ENCODE measurements at regions of chr2 and their contacts with region 1.

Region 1: GRCh38 chr2:152036611-152037469 is 62.0 kb downstream of the CACNB4 start:
- DNase-seq: peak; percentile 76
- H3K4me3 Mint-ChIP-seq: no peak overlapping the region
- H3K27ac Mint-ChIP-seq: no peak overlapping the region
- H3K4me1 Mint-ChIP-seq: no peaks in the 10 kb centered on the region
- H3K27me3 Mint-ChIP-seq: no peaks in the 10 kb centered on the region
- CTCF ChIP-seq: peak; percentile 86

Region 2: DNA sequence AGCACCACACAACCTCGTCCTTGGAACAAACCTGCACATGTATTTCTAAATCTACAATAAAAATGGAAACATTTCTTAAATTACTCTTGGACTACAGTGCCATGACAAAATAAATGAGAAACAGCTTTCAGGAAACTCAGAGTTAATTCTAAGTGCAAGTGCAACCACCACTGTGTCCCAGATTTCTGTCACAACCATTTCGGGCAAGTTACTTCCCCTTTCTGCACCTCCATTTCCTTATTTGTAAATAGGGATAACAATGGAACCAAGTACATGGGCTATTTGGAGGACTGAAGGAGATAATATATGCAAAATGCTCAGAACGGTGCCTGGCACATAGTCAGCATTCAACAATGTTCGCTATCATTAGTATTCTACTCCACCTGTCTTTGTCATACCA is 31.2 kb before region 1 on chr2:
- CTCF ChIA-PET with region 1: no interaction called
- POLR2A ChIA-PET with region 1: no interaction called
- intact Hi-C with region 1: no loop called
- DNase-seq: no peak
- H3K4me3 Mint-ChIP-seq: no peak overlapping the region
- H3K27ac Mint-ChIP-seq: no peak overlapping the region
- H3K4me1 Mint-ChIP-seq: peaks cover 8% of the 10 kb centered on the region
- H3K27me3 Mint-ChIP-seq: no peaks in the 10 kb centered on the region
- CTCF ChIP-seq: no peak

Region 3: DNA sequence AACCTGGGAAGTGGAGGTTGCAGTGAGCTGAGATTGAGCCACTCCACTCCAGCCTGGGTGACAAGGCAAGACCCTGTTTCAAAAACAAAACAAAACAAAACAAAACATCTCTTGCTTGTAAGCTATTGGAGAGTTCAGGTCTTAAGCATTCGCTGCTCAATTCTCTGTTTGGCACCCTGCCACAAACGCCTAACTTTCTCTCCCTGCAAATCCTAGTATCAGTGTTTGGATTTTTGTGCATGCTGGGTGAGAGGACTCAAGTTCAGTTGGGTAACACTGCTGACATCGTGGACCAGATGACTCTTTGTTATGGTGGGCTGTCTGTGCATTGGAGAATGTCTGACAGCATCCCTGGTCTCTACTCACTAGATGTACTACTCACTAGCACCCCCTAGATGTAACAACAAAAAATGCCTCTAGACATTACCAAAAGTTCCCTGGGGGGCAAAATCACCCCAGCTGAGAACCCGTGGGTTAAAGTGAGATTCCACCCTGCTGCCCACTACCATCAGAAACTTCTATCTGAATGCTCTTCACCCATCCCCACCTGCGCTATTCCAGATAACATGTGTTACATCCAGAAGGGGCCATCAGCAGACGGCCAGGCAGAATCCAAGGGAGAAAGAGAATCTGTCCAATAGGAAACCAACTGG is 11.1 kb after region 1 on chr2:
- CTCF ChIA-PET with region 1: interaction called, 47 read pairs
- POLR2A ChIA-PET with region 1: no interaction called
- intact Hi-C with region 1: no loop called
- DNase-seq: peak; percentile 42
- H3K4me3 Mint-ChIP-seq: no peak overlapping the region
- H3K27ac Mint-ChIP-seq: no peak overlapping the region
- H3K4me1 Mint-ChIP-seq: no peaks in the 10 kb centered on the region
- H3K27me3 Mint-ChIP-seq: peaks cover 47% of the 10 kb centered on the region
- CTCF ChIP-seq: peak; percentile 44

Region 4: DNA sequence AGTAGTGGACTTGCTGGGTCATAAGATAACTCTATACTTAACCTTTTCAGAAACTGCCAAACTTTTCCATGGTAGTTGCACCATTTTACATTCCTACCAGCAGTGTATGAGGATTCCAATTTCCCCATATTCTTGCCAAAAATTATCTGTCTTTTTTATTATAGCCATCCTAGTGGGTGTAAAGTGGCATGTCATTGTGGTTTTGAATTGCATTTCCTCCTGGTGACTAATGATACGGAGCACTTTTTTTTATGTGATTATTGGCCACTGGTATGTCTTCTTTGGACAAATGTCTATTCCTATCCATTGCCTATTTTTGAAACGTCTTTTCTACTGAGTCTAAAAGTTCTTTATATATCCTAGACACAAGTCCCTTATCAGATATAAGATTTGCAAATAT is 17.8 kb after region 1 on chr2:
- CTCF ChIA-PET with region 1: interaction called, 47 read pairs
- POLR2A ChIA-PET with region 1: no interaction called
- intact Hi-C with region 1: no loop called
- DNase-seq: peak; percentile 72
- H3K4me3 Mint-ChIP-seq: no peak overlapping the region
- H3K27ac Mint-ChIP-seq: no peak overlapping the region
- H3K4me1 Mint-ChIP-seq: peaks cover 6% of the 10 kb centered on the region
- H3K27me3 Mint-ChIP-seq: peaks cover 35% of the 10 kb centered on the region
- CTCF ChIP-seq: no peak

Region 5: GRCh38 chr2:152115952-152116351 is 79.1 kb after region 1 on chr2:
- CTCF ChIA-PET with region 1: interaction called, 13 read pairs
- POLR2A ChIA-PET with region 1: no interaction called
- intact Hi-C with region 1: no loop called
- DNase-seq: no peak
- H3K4me3 Mint-ChIP-seq: no peak overlapping the region
- H3K27ac Mint-ChIP-seq: no peak overlapping the region
- H3K4me1 Mint-ChIP-seq: no peaks in the 10 kb centered on the region
- H3K27me3 Mint-ChIP-seq: no peaks in the 10 kb centered on the region
- CTCF ChIP-seq: peak; percentile 11

Region 6: GRCh38 chr2:152167065-152167464 is 130.2 kb after region 1 on chr2:
- CTCF ChIA-PET with region 1: interaction called, 30 read pairs
- POLR2A ChIA-PET with region 1: interaction called, 3 read pairs
- intact Hi-C with region 1: no loop called
- DNase-seq: no peak
- H3K4me3 Mint-ChIP-seq: no peak overlapping the region
- H3K27ac Mint-ChIP-seq: no peak overlapping the region
- H3K4me1 Mint-ChIP-seq: peaks cover 7% of the 10 kb centered on the region
- H3K27me3 Mint-ChIP-seq: no peaks in the 10 kb centered on the region
- CTCF ChIP-seq: no peak